Endothelial cell of umbilical vein (primary cell): ENCODE measurements at regions of chr20 and their contacts with region 1.

Region 1: GRCh38 chr20:33933469-33933909 is 60.2 kb upstream of the RALY start:
- DNase-seq: no peak
- H3K4me3 ChIP-seq: no peak overlapping the region
- H3K27ac ChIP-seq: no peak overlapping the region
- H3K4me1 ChIP-seq: no peaks in the 10 kb centered on the region
- H3K27me3 ChIP-seq: peaks cover 0 to 2% of the 10 kb centered on the region in 2 experiments
- CTCF ChIP-seq: peak; percentile 19 to 21
- POLR2A ChIP-seq: no peak

Region 2: GRCh38 chr20:33630507-33630906 is 303.0 kb before region 1 on chr20:
- CTCF ChIA-PET with region 1: no interaction called
- POLR2A ChIA-PET with region 1: no interaction called
- dilution Hi-C with region 1: no loop called
- intact Hi-C with region 1: no loop called
- DNase-seq: no peak
- H3K4me3 ChIP-seq: no peak overlapping the region
- H3K27ac ChIP-seq: no peak overlapping the region
- H3K4me1 ChIP-seq: no peaks in the 10 kb centered on the region
- H3K27me3 ChIP-seq: no peaks in the 10 kb centered on the region
- CTCF ChIP-seq: no peak
- POLR2A ChIP-seq: no peak

Region 3: GRCh38 chr20:34129518-34130162 is 196.2 kb after region 1 on chr20:
- CTCF ChIA-PET with region 1: interaction called, 4 read pairs
- POLR2A ChIA-PET with region 1: no interaction called
- dilution Hi-C with region 1: no loop called
- intact Hi-C with region 1: loop called (anchors 1 kb)
- DNase-seq: peak; percentile 78
- H3K4me3 ChIP-seq: no peak overlapping the region
- H3K27ac ChIP-seq: no peak overlapping the region
- H3K4me1 ChIP-seq: peaks cover 3% of the 10 kb centered on the region
- H3K27me3 ChIP-seq: no peaks in the 10 kb centered on the region
- CTCF ChIP-seq: peak; percentile 61 to 76
- POLR2A ChIP-seq: no peak